GM10248 (cell line): ENCODE measurements at regions of chr15 and their contacts with region 1.

Region 1: DNA sequence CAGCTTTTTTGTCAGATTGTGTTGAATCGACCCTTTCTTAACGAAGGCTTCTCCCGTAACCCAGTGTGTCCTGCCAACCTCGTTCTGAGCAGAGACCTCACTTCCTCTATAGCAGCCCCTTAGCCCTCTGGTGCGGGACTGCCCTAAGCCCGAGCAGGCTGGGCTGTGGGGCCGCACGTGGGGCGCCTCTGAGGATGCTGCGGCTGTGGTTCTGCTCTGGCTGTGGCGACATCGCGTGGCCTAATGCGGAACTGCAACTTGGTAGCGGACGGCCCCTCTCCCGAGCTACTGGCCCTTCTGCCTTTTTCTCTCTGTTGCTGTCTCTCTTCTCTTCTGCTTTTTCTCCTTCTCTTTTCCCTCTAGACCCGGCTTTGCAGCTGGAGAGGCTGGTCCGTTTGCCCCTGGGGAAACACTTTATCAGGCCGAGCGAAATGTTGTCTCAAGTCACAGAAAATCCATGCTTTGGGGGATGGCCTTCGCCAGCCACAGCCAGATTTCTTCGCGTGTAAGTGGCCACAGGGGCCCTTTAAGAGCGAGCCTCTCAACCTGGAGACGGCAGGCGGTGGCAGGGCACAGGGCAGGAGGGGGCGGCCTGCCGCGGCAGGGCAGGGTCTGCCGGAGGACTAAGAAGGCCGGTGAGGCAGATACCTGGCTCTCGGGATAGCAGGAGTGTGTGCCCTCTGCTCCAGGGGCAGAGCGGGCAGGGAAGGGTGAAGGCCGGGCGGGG is 19.4 kb upstream of the KIF23 start:
- DNase-seq: peak; percentile 89
- CTCF ChIP-seq: peak; percentile 92

Region 2: GRCh38 chr15:69058830-69059556 is 335.7 kb before region 1 on chr15:
- CTCF ChIA-PET with region 1: interaction called, 46 read pairs
- POLR2A ChIA-PET with region 1: no interaction called
- DNase-seq: peak; percentile 78
- CTCF ChIP-seq: peak; percentile 78

Region 3: GRCh38 chr15:69380100-69380727 is 14.5 kb before region 1 on chr15:
- CTCF ChIA-PET with region 1: interaction called, 14 read pairs
- POLR2A ChIA-PET with region 1: no interaction called
- DNase-seq: no peak
- CTCF ChIP-seq: no peak